Breast epithelium (tissue), 4 donors: ENCODE measurements at regions of chr2 and their contacts with region 1.

Region 1: GRCh38 chr2:200985799-200986198 is 22.3 kb upstream of the ORC2 start:
- DNase-seq: no peak
- H3K4me3 ChIP-seq: no peak overlapping the region
- H3K27ac ChIP-seq: no peak overlapping the region
- H3K4me1 ChIP-seq: no peaks in the 10 kb centered on the region
- H3K27me3 ChIP-seq: no peaks in the 10 kb centered on the region
- CTCF ChIP-seq: no peak
- POLR2A ChIP-seq: no peak

Region 2: GRCh38 chr2:200943527-200944105 is 42.2 kb before region 1 on chr2:
- intact Hi-C with region 1: loop called (anchors 2 kb)
- DNase-seq: no peak
- H3K4me3 ChIP-seq: no peak overlapping the region
- H3K27ac ChIP-seq: no peak overlapping the region
- H3K4me1 ChIP-seq: no peaks in the 10 kb centered on the region
- H3K27me3 ChIP-seq: no peaks in the 10 kb centered on the region
- CTCF ChIP-seq: no peak
- POLR2A ChIP-seq: no peak

Region 3: DNA sequence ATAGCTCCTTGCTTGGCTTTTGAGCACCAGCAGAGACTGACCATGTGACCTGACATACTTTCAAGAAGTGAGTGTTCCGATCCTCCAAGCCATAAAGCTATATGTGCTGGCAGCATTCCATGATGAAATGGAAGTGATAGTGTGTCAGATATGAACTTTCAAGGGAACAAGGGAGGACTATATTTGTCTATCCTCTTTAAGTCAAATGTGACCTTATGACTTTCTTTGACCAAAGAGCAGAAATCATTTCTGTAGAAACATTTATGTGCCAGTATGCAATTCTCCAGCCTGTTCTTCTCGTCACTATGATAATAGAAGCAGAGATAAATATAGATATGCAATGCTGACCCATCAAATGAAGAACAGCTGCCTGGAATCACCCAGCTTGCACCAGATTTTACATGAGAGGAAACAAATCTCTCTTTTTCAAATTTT is 71.3 kb after region 1 on chr2:
- intact Hi-C with region 1: no loop called
- DNase-seq: no peak
- H3K4me3 ChIP-seq: no peak overlapping the region
- H3K27ac ChIP-seq: peak overlapping the region in 1 of 2 donors; percentile 34
- H3K4me1 ChIP-seq: no peaks in the 10 kb centered on the region
- H3K27me3 ChIP-seq: no peaks in the 10 kb centered on the region
- CTCF ChIP-seq: no peak
- POLR2A ChIP-seq: no peak

Region 4: GRCh38 chr2:201517094-201517493 is 531.3 kb after region 1 on chr2:
- intact Hi-C with region 1: no loop called
- DNase-seq: no peak
- H3K4me3 ChIP-seq: no peak overlapping the region
- H3K27ac ChIP-seq: no peak overlapping the region
- H3K4me1 ChIP-seq: no peaks in the 10 kb centered on the region
- H3K27me3 ChIP-seq: no peaks in the 10 kb centered on the region
- CTCF ChIP-seq: no peak
- POLR2A ChIP-seq: no peak